Heart right ventricle (tissue), 16 donors: ENCODE measurements at regions of chr12 and their contacts with region 1.

Region 1: DNA sequence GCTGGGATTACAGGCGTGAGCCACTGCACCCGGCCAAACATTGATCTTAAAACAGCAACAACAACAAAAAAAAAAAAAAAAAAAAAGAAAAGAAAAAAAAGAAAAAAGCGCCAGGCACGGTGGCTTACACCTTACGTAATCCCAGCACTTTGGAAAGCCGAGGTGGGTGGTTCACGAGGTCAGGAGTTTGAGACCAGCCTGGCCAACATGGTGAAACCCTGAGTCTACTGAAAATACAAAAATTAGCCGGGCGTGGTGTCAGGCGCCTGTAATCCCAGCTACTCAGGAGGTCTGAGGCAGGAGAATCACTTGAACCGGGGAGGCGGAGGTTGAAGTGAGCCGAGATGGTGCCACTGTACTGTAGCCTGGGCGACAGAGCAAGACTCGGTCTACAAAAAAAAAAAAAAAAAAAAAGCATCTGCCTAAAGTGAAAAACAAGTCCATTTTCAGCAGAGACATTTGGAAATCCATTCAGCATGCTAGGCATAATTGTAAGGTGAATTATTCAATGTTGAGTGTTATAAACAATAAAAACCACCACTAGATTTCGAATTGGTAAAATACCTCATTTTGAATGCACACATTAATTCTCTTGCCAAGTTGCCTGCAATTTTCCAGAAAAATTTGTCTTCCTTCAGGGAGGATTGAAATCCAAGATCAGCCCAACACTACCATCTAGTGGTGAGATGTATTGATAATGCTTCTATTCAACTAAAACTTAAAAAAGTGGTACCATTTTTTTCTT is 8.0 kb upstream of the CERS5 start:
- DNase-seq: peak in 1 of 2 donors; percentile 52
- ATAC-seq: peak in 2 of 8 donors; percentile 44 to 57
- H3K4me3 ChIP-seq: no peak overlapping the region
- H3K27ac ChIP-seq: no peak overlapping the region
- H3K4me1 ChIP-seq: no peaks in the 10 kb centered on the region
- H3K27me3 ChIP-seq: no peaks in the 10 kb centered on the region
- CTCF ChIP-seq: peak; percentile 46 to 79 (median 70)

Region 2: GRCh38 chr12:49967042-49967776 is 207.9 kb before region 1 on chr12:
- intact Hi-C with region 1: loop called in 3 of 10 experiments (anchors 10 kb)
- DNase-seq: peak; percentile 88 to 93
- ATAC-seq: peak; percentile 72 to 90 (median 84)
- H3K4me3 ChIP-seq: peak overlapping the region in 9 of 10 donors; percentile 26 to 50 (median 42)
- H3K27ac ChIP-seq: no peak overlapping the region
- H3K4me1 ChIP-seq: peaks cover 5 to 26% (median 9%) of the 10 kb centered on the region in 9 donors
- H3K27me3 ChIP-seq: peaks cover 0 to 69% (median 27%) of the 10 kb centered on the region in 7 donors
- CTCF ChIP-seq: peak; percentile 68 to 90 (median 78)

Region 3: GRCh38 chr12:50074936-50075807 is 100.0 kb before region 1 on chr12:
- intact Hi-C with region 1: loop called in 9 of 10 experiments (anchors 1 to 5 kb)
- DNase-seq: peak; percentile 84 to 85
- ATAC-seq: peak; percentile 84 to 92 (median 88)
- H3K4me3 ChIP-seq: no peak overlapping the region
- H3K27ac ChIP-seq: no peak overlapping the region
- H3K4me1 ChIP-seq: peaks cover 3 to 13% (median 6%) of the 10 kb centered on the region in 9 donors
- H3K27me3 ChIP-seq: no peaks in the 10 kb centered on the region
- CTCF ChIP-seq: peak; percentile 76 to 97 (median 94)

Region 4: DNA sequence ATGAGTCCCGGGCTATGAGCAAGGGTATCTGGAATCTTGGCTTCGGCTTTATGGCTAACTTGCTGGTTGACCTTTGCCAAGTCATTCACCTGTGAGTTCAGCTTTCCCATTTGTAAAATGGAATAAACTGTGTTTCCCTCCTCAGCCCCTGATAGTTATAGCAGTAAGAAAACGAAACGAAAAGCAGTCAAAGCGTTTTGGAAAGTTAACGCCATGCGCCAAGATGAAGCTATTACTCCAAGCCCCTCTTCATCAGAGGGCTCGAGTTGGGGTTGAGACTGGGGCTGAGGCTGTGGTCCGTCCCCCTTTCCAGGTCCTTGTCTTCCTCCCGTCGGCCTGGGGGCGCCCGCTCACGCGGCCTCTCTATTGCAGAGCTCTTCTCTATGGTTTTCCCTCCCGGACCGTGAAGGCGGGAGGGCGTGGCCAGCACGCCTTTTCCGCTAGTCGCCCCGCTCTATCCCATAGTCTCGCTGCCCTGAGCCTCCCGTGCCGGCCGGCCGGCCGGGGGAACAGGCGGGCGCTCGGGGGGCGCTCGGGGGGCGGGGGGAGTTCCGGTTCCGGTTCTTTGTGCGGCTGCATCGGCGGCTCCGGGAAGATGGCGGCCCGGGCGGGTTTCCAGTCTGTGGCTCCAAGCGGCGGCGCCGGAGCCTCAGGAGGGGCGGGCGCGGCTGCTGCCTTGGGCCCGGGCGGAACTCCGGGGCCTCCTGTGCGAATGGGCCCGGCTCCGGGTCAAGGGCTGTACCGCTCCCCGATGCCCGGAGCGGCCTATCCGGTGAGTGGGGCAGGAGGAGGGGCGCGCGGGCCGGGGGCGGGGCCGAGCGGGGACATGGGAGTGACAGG is 90.1 kb before region 1 on chr12 and contains the start of gene SMARCD1:
- intact Hi-C with region 1: loop called in 2 of 10 experiments (anchors 5 kb)
- DNase-seq: peak; percentile 93
- ATAC-seq: peak; percentile 95 to 98 (median 96)
- H3K4me3 ChIP-seq: peak within 1 kb of the TSS; percentile 73 to 99 (median 90)
- H3K27ac ChIP-seq: peak within 1 kb of the TSS; percentile 95 to 100 (median 98)
- H3K4me1 ChIP-seq: peaks cover 0 to 34% (median 13%) of the 10 kb centered on the region in 9 donors
- H3K27me3 ChIP-seq: no peaks in the 10 kb centered on the region
- CTCF ChIP-seq: peak in 8 of 9 donors; percentile 12 to 78 (median 59)
- total RNA-seq, gene SMARCD1: 13.3 to 24.0 (median 17.4) TPM

Region 5: DNA sequence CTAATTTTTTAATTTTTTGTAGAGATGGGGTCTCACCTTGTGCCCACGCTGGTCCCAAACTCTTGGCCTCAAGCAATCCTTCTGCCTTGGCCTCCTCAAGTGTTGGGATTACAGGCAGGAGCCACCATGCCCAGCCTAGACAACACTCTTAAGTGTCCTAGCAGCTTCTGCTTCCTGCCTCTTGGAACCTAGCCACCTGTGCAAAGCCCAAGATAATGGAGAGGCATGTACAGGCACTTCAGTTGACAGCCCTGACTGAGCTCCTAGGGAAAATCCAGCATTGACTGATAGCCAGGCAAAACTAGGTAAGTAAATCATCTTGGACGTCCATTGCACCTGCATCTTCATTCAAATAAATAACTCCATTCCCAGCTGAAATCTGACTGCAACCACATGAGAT is 47.6 kb before region 1 on chr12:
- intact Hi-C with region 1: loop called in 4 of 10 experiments (anchors 2 to 5 kb)
- DNase-seq: no peak
- ATAC-seq: peak in 5 of 8 donors; percentile 41 to 78 (median 69)
- H3K4me3 ChIP-seq: no peak overlapping the region
- H3K27ac ChIP-seq: no peak overlapping the region
- H3K4me1 ChIP-seq: peaks cover 0 to 45% (median 15%) of the 10 kb centered on the region in 9 donors
- H3K27me3 ChIP-seq: no peaks in the 10 kb centered on the region
- CTCF ChIP-seq: no peak

Region 6: GRCh38 chr12:50132505-50133135 is 42.5 kb before region 1 on chr12:
- intact Hi-C with region 1: loop called in 4 of 10 experiments (anchors 2 to 5 kb)
- DNase-seq: no peak
- ATAC-seq: no peak
- H3K4me3 ChIP-seq: no peak overlapping the region
- H3K27ac ChIP-seq: no peak overlapping the region
- H3K4me1 ChIP-seq: peaks cover 0 to 35% (median 4%) of the 10 kb centered on the region in 9 donors
- H3K27me3 ChIP-seq: no peaks in the 10 kb centered on the region
- CTCF ChIP-seq: peak in 8 of 9 donors; percentile 40 to 73 (median 47)

Region 7: GRCh38 chr12:50246873-50247612 is 71.9 kb after region 1 on chr12:
- intact Hi-C with region 1: no loop called
- DNase-seq: peak; percentile 24 to 86
- ATAC-seq: peak; percentile 75 to 92 (median 89)
- H3K4me3 ChIP-seq: no peak overlapping the region
- H3K27ac ChIP-seq: peak overlapping the region in 8 of 10 donors; percentile 36 to 83 (median 72)
- H3K4me1 ChIP-seq: peaks cover 4 to 70% (median 48%) of the 10 kb centered on the region in 9 donors
- H3K27me3 ChIP-seq: no peaks in the 10 kb centered on the region
- CTCF ChIP-seq: no peak